ENCODE measurements at regions of chr9 and their contacts with region 1.

Region 1: DNA sequence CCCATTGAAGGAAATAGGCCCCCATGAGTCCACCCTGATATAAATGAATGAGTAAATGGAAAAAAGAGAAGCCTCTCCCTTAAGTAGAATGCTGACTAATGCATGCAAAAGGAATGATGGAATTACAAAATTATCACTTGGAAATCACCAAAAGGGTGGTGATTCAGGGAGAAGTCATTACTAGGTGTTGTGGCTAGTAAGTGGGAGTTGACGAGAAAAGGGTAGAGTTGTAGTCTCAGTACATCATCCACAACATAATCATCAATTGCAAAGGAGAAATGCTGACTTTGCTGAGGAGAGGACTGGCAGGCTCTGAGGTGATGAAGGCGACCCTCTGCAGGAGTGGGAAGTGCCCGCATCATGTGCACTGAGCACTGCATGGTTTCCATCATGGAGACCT is 201.5 kb upstream of the S1PR3 start:
- DNase-seq: peak; percentile 92
- H3K4me3 ChIP-seq: no peak overlapping the region
- H3K27ac ChIP-seq: peak overlapping the region; percentile 56
- H3K4me1 ChIP-seq: peaks cover 29% of the 10 kb centered on the region
- H3K27me3 ChIP-seq: no peaks in the 10 kb centered on the region
- CTCF ChIP-seq: no peak

Region 2: DNA sequence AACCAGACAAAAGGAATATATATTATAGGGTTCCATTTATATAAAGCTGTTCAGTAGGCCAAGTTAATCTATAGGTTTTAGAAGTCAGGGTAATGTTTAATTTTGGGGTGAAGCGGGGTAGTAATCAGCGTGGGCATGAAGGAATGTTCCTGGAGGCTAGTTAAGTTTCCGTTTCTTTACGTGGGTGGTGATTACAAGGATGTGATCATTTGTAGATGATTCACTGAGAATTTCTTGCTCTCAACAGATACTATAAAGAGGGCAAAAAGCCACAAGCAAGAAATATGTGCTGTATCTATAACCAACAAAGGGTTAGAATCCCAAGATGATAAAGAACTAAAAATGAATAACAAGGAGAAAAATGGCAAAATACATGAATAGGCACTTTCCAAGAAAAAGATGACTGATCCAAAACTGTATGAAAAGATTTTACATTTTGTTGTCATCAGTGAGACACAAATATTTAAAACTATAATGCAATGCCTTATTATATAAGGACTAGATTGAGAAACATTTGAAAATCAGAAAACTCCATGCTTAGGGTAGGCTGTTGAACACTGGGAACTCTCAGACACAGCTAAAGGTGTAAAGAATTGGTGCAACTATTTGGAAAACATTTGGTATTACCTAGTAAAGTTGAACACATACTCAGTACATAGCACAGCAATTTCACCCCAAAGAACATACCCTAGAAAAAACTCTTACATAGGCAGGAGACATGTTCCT is 22.8 kb before region 1 on chr9:
- CTCF ChIA-PET with region 1: no interaction called
- dilution Hi-C with region 1: no loop called
- in situ Hi-C with region 1: no loop called
- intact Hi-C with region 1: loop called (anchors 2 kb)
- DNase-seq: peak; percentile 94
- H3K4me3 ChIP-seq: no peak overlapping the region
- H3K27ac ChIP-seq: peak overlapping the region; percentile 100
- H3K4me1 ChIP-seq: peaks cover 43% of the 10 kb centered on the region
- H3K27me3 ChIP-seq: no peaks in the 10 kb centered on the region
- CTCF ChIP-seq: no peak